Activated CD8-positive, alpha-beta T cell treated with anti-CD3 and anti-CD28 coated beads for 36 hours (primary cell): ENCODE measurements at regions of chr19 and their contacts with region 1.

Region 1: DNA sequence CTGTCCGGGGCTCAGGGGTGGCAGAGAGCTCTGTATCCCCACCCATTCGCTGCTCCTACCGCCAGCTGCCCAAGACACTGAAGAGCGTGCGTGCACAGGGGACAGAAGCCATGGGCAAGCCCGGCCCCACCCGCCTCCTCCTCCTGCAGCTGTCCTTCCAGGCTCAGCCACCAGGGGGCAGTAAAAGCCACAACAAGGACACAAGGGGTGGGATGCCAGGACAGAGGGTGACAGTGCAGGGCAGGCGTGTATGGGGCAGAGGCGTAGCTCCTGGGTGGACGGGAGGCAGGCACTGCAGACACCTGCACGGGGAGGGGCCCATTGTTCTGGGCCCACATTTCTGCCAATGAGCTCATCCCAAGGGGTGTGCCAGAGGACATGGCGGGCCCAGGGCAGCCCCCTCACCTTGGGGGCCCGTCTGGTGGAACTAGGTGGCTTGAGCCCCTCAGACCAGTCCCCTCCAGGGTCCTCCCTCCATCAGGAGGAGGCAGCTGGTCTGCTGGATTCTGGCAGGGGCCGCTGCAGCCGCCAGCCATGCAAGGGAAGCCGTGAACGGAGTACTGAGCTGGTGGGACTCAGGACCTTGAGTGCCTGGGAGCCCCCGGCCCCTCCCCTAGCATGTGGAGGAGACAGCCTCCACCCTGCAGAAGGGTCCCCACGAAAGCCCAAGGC is 61.1 kb downstream of the MLLT1 start:
- DNase-seq: peak; percentile 93
- ATAC-seq: peak; percentile 99
- H3K4me3 Mint-ChIP-seq: no peak overlapping the region
- H3K27ac Mint-ChIP-seq: no peak overlapping the region
- H3K4me1 Mint-ChIP-seq: peaks cover 3% of the 10 kb centered on the region
- H3K27me3 Mint-ChIP-seq: no peaks in the 10 kb centered on the region
- CTCF ChIP-seq: peak; percentile 93

Region 2: DNA sequence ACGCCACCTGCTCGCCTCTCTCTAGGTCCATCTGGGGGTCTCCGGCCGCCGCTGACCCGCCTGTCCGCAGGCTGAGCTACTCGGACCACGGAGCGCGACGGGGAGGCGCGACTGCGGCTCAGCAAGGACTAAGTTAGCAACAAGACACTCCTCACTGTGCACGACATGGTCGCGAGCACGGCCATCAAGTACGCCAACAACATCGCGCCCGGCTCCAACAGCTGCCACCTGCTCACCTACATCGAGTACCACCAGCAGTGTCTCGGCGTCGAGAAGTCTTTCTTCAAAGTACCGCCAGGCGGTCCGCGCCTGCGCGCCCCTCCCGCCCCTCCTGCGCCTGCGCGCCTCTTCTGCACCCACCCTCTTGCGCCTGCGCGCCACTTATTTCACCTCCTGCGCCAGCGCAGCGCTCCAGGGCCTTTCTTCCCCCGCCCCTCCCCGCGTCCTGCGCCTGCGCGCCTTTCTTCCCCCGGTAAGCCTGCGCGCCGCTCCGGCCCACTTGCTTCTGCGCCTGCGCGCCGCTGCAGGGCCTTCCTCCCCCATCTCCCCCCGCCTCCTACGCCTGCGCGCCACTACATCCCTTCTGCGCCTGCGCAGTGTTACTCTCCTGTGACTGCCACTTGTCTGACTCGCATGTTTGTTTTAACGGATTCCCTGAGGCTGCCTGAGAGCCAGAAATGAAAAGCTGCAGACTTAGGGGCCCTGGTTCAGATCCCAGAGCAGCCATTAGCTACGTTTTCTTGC is 19.2 kb before region 1 on chr19:
- CTCF ChIA-PET with region 1: interaction called, 10 read pairs
- POLR2A ChIA-PET with region 1: no interaction called
- intact Hi-C with region 1: no loop called
- DNase-seq: peak; percentile 99
- ATAC-seq: peak; percentile 92
- H3K4me3 Mint-ChIP-seq: peak overlapping the region; percentile 100
- H3K27ac Mint-ChIP-seq: peak overlapping the region; percentile 86
- H3K4me1 Mint-ChIP-seq: peaks cover 13% of the 10 kb centered on the region
- H3K27me3 Mint-ChIP-seq: no peaks in the 10 kb centered on the region
- CTCF ChIP-seq: peak; percentile 62

Region 3: GRCh38 chr19:6258812-6259311 is 40.2 kb after region 1 on chr19:
- CTCF ChIA-PET with region 1: interaction called, 12 read pairs
- POLR2A ChIA-PET with region 1: no interaction called
- intact Hi-C with region 1: no loop called
- DNase-seq: no peak
- ATAC-seq: no peak
- H3K4me3 Mint-ChIP-seq: no peak overlapping the region
- H3K27ac Mint-ChIP-seq: no peak overlapping the region
- H3K4me1 Mint-ChIP-seq: peaks cover 23% of the 10 kb centered on the region
- H3K27me3 Mint-ChIP-seq: no peaks in the 10 kb centered on the region
- CTCF ChIP-seq: no peak

Region 4: GRCh38 chr19:6297202-6297601 is 78.6 kb after region 1 on chr19:
- CTCF ChIA-PET with region 1: interaction called, 20 read pairs
- POLR2A ChIA-PET with region 1: no interaction called
- intact Hi-C with region 1: no loop called
- DNase-seq: no peak
- ATAC-seq: no peak
- H3K4me3 Mint-ChIP-seq: no peak overlapping the region
- H3K27ac Mint-ChIP-seq: no peak overlapping the region
- H3K4me1 Mint-ChIP-seq: no peaks in the 10 kb centered on the region
- H3K27me3 Mint-ChIP-seq: peaks cover 3% of the 10 kb centered on the region
- CTCF ChIP-seq: no peak